Activated naive CD4-positive, alpha-beta T cell treated with anti-CD3 and anti-CD28 coated beads for 36 hours (primary cell): ENCODE measurements at regions of chr15 and their contacts with region 1.

Region 1: GRCh38 chr15:54082836-54083492 is 104.7 kb downstream of the UNC13C start:
- DNase-seq: no peak
- H3K4me3 Mint-ChIP-seq: no peak overlapping the region
- H3K27ac Mint-ChIP-seq: no peak overlapping the region
- H3K4me1 Mint-ChIP-seq: no peaks in the 10 kb centered on the region
- H3K27me3 Mint-ChIP-seq: peaks cover 12% of the 10 kb centered on the region

Region 2: GRCh38 chr15:54017959-54018358 is 65.0 kb before region 1 on chr15:
- CTCF ChIA-PET with region 1: no interaction called
- intact Hi-C with region 1: no loop called
- DNase-seq: no peak
- H3K4me3 Mint-ChIP-seq: no peak overlapping the region
- H3K27ac Mint-ChIP-seq: no peak overlapping the region
- H3K4me1 Mint-ChIP-seq: no peaks in the 10 kb centered on the region
- H3K27me3 Mint-ChIP-seq: no peaks in the 10 kb centered on the region

Region 3: GRCh38 chr15:55108858-55109518 is 1026.0 kb after region 1 on chr15:
- CTCF ChIA-PET with region 1: no interaction called
- intact Hi-C with region 1: loop called (anchors 1 kb)
- DNase-seq: peak; percentile 78
- H3K4me3 Mint-ChIP-seq: no peak overlapping the region
- H3K27ac Mint-ChIP-seq: no peak overlapping the region
- H3K4me1 Mint-ChIP-seq: no peaks in the 10 kb centered on the region
- H3K27me3 Mint-ChIP-seq: no peaks in the 10 kb centered on the region